ENCODE measurements at regions of chr1 and their contacts with region 1.

Region 1: GRCh38 chr1:29793101-29793546 is 556.8 kb downstream of the PTPRU start:
- DNase-seq: peak; percentile 78 to 84
- H3K4me3 ChIP-seq: no peak overlapping the region
- H3K27ac ChIP-seq: no peak overlapping the region
- H3K4me1 ChIP-seq: no peaks in the 10 kb centered on the region
- H3K27me3 ChIP-seq: no peaks in the 10 kb centered on the region
- CTCF ChIP-seq: peak; percentile 54 to 77 (median 61)
- POLR2A ChIP-seq: no peak

Region 2: DNA sequence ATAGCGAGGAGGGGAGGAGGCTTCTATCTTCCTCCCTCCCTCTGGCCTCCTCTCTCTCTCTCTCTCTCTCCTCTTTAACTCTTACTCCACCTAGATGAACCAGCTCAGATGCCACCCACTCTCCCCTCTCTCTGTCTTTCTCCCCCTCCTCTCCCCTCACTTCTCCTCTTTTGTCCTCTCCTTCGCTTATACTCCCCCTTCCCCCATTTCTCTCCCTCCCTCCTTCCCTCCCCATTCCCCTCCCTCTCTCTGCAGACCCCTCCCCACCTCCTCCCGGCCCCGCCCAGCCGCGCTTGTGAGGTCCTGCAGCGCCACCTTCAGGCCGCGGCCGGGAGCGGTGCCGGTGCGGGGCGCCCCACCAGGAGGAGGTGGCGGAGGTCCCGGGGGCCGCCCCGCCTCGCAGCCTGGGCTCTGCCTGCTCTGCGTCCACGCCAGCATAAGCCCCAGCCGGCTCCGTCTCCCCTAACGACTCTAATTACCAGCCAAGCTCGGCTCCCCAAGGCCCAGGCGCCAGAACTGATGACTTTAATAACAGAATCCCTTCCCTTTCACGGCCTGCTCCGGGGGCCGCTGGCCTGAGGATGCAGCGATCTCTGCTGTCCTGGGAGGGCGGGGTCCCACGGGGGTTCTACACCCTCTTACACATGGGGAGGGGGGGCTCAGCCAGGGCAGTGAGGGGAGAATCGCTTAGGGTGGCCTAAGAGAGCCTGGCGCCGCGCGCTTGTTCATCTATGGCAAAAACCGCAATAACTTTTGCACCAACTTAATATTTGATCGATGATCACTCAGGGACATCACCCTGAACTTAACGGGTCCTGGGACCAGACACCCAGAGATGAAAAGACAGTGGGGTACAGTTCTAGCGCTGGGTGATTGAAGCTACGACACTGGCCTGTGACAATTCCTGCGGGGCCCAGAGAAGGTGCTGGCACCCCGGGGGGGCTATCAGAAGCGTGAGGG is 293.0 kb after region 1 on chr1:
- intact Hi-C with region 1: loop called (anchors 10 kb)
- DNase-seq: peak; percentile 14 to 24
- H3K4me3 ChIP-seq: no peak overlapping the region
- H3K27ac ChIP-seq: no peak overlapping the region
- H3K4me1 ChIP-seq: peaks cover 6 to 42% of the 10 kb centered on the region in 2 donors
- H3K27me3 ChIP-seq: no peaks in the 10 kb centered on the region
- CTCF ChIP-seq: peak in 4 of 6 experiments; percentile 24 to 55 (median 36)
- POLR2A ChIP-seq: no peak

Measured in thyroid gland (tissue), 4 donors.